CD8-positive, alpha-beta memory T cell (primary cell): ENCODE measurements at regions of chr5 and their contacts with region 1.

Region 1: GRCh38 chr5:95835682-95836385 is 13.3 kb upstream of the GLRX start:
- DNase-seq: peak in 2 of 5 donors; percentile 37 to 57
- H3K4me3 ChIP-seq: peak overlapping the region; percentile 61
- H3K4me3 Mint-ChIP-seq: peak overlapping the region; percentile 82 to 96 (median 87)
- H3K27ac ChIP-seq: peak overlapping the region; percentile 49
- H3K27ac Mint-ChIP-seq: peak overlapping the region; percentile 76 to 98 (median 94)
- H3K4me1 ChIP-seq: peaks cover 33% of the 10 kb centered on the region
- H3K4me1 Mint-ChIP-seq: peaks cover 42 to 51% (median 47%) of the 10 kb centered on the region in 3 donors
- H3K27me3 ChIP-seq: no peaks in the 10 kb centered on the region
- H3K27me3 Mint-ChIP-seq: no peaks in the 10 kb centered on the region

Region 2: GRCh38 chr5:95731571-95732554 is 104.0 kb before region 1 on chr5:
- CTCF ChIA-PET with region 1: no interaction called
- POLR2A ChIA-PET with region 1: no interaction called
- DNase-seq: peak in 2 of 5 donors; percentile 3 to 30
- H3K4me3 ChIP-seq: peak overlapping the region; percentile 46
- H3K4me3 Mint-ChIP-seq: peak overlapping the region; percentile 79 to 87 (median 80)
- H3K27ac ChIP-seq: peak overlapping the region; percentile 68
- H3K27ac Mint-ChIP-seq: no peak overlapping the region
- H3K4me1 ChIP-seq: peaks cover 32% of the 10 kb centered on the region
- H3K4me1 Mint-ChIP-seq: peaks cover 5 to 16% (median 15%) of the 10 kb centered on the region in 3 donors
- H3K27me3 ChIP-seq: peaks cover 11% of the 10 kb centered on the region
- H3K27me3 Mint-ChIP-seq: peaks cover 23 to 64% of the 10 kb centered on the region in 2 donors

Region 3: GRCh38 chr5:95786901-95787300 is 48.9 kb before region 1 on chr5:
- CTCF ChIA-PET with region 1: interaction called, 93 read pairs
- POLR2A ChIA-PET with region 1: no interaction called
- DNase-seq: no peak
- H3K4me3 ChIP-seq: no peak overlapping the region
- H3K4me3 Mint-ChIP-seq: no peak overlapping the region
- H3K27ac ChIP-seq: no peak overlapping the region
- H3K27ac Mint-ChIP-seq: no peak overlapping the region
- H3K4me1 ChIP-seq: no peaks in the 10 kb centered on the region
- H3K4me1 Mint-ChIP-seq: peaks cover 3 to 9% (median 7%) of the 10 kb centered on the region in 3 donors
- H3K27me3 ChIP-seq: no peaks in the 10 kb centered on the region
- H3K27me3 Mint-ChIP-seq: peaks cover 0 to 2% of the 10 kb centered on the region in 2 donors

Region 4: DNA sequence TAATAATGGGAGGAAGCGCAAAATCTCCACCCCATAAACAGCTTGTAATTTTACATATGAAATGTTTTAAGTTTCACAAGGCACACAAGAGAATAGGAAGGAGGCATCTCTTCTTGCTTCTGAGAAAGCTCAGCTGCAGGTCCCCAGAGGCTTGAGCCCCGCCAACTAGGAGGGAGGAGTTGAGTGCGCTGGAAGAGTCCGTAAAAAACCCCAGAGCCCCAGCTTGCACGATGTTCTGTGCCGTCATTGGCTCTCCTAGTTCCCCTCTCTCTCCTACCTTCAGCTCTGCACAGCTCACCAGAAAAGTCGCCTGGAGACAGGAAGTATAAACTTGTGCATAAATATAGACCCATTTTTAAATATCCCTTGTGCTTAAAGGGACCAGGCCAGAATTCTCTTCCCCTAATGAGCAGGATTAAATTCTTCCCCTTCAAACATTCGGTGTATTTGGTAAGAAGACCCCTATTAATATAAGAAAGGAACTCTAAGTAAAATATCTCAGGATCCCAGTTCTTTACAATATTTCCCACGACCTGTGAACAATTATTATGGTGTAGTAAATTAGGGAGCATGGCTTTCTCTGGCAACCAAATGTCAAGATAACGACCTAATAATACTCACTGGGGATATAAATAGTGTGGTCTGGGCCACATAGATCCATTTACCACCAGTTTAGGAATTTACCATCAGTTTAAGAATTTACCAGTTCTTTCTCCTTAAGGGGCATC is 27.0 kb before region 1 on chr5:
- CTCF ChIA-PET with region 1: interaction called, 11 read pairs
- POLR2A ChIA-PET with region 1: interaction called, 7 read pairs
- DNase-seq: peak; percentile 67 to 90 (median 86)
- H3K4me3 ChIP-seq: peak overlapping the region; percentile 31
- H3K4me3 Mint-ChIP-seq: peak overlapping the region; percentile 20 to 82 (median 71)
- H3K27ac ChIP-seq: peak overlapping the region; percentile 4
- H3K27ac Mint-ChIP-seq: peak overlapping the region; percentile 65 to 96 (median 87)
- H3K4me1 ChIP-seq: peaks cover 57% of the 10 kb centered on the region
- H3K4me1 Mint-ChIP-seq: peaks cover 60 to 65% (median 61%) of the 10 kb centered on the region in 3 donors
- H3K27me3 ChIP-seq: no peaks in the 10 kb centered on the region
- H3K27me3 Mint-ChIP-seq: no peaks in the 10 kb centered on the region

Region 5: DNA sequence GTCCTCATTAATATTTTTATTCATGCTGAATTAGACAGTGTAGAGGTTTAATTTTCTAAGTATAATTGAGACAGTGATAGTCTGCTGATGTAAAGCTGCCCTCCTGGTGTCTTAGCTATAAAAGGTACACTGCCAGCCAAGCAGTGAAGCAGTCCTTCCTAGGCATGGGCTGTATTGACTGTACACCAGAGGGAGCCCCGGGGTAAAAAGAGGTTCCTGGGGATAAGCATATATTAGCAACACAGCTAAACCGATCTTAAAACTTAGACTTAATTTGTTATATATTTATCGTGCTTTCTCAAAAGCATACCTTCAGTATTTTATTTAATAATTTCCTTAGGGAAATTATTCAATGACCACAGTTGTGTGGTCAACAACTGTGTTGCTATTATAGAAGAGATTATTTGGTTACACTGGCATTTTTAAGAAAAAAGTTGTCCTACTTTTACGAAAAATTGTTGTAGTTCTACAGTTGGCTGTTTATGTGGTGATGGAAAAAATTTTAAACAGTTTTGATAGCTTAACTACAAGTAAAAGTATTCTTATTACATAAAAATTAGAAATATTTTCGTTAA is 57.0 kb after region 1 on chr5:
- CTCF ChIA-PET with region 1: no interaction called
- POLR2A ChIA-PET with region 1: no interaction called
- DNase-seq: no peak
- H3K4me3 ChIP-seq: no peak overlapping the region
- H3K4me3 Mint-ChIP-seq: no peak overlapping the region
- H3K27ac ChIP-seq: no peak overlapping the region
- H3K27ac Mint-ChIP-seq: no peak overlapping the region
- H3K4me1 ChIP-seq: no peaks in the 10 kb centered on the region
- H3K4me1 Mint-ChIP-seq: no peaks in the 10 kb centered on the region
- H3K27me3 ChIP-seq: no peaks in the 10 kb centered on the region
- H3K27me3 Mint-ChIP-seq: no peaks in the 10 kb centered on the region